Activated B cell treated with CpG ODN at 0.5 μM for 24 hours (primary cell): ENCODE measurements at regions of chr3 and their contacts with region 1.

Region 1: DNA sequence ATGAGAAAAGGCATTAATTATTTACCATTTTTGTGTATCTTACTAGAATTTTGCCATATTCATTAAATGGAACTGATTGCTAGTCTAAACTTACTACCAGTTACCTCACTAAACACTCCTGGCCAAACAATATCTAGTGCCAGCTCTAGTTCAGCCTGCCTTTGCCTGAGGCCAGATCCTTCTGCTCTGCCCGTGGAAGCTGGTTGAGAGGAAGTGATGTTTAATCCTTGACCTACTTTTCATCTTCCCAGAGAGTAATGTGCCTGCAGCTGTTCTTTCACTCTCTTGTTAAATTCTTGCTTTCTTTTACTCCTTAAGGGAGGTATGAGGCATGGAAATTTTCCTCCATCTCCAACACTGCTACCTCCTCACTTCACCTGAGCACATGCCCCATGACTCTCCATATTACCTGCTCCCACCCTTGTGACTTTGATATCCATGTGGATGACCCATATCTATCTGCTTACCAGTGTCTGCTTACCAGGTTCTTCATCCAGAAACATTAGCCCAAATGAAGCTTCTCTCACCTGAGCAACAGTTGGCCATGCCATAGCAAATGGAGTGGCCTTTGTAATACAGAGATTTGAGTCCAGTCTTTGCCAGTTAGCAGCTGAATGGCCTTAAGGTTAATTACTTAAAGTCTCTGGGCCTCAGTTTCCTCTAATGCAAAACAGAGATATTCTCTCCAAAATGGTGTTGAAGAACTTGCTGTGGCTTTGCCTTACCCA is 53.4 kb downstream of the UBE2E1 start:
- DNase-seq: no peak
- ATAC-seq: no peak
- H3K4me3 Mint-ChIP-seq: no peak overlapping the region
- H3K27ac Mint-ChIP-seq: no peak overlapping the region
- H3K4me1 Mint-ChIP-seq: peaks cover 54% of the 10 kb centered on the region
- H3K27me3 Mint-ChIP-seq: no peaks in the 10 kb centered on the region
- CTCF ChIP-seq: no peak

Region 2: GRCh38 chr3:23071758-23072157 is 787.4 kb before region 1 on chr3:
- CTCF ChIA-PET with region 1: no interaction called
- POLR2A ChIA-PET with region 1: interaction called, 4 read pairs
- intact Hi-C with region 1: loop called (anchors 5 kb)
- DNase-seq: no peak
- ATAC-seq: peak; percentile 89
- H3K4me3 Mint-ChIP-seq: peak overlapping the region; percentile 1
- H3K27ac Mint-ChIP-seq: peak overlapping the region; percentile 42
- H3K4me1 Mint-ChIP-seq: peaks cover 56% of the 10 kb centered on the region
- H3K27me3 Mint-ChIP-seq: no peaks in the 10 kb centered on the region
- CTCF ChIP-seq: no peak

Region 3: DNA sequence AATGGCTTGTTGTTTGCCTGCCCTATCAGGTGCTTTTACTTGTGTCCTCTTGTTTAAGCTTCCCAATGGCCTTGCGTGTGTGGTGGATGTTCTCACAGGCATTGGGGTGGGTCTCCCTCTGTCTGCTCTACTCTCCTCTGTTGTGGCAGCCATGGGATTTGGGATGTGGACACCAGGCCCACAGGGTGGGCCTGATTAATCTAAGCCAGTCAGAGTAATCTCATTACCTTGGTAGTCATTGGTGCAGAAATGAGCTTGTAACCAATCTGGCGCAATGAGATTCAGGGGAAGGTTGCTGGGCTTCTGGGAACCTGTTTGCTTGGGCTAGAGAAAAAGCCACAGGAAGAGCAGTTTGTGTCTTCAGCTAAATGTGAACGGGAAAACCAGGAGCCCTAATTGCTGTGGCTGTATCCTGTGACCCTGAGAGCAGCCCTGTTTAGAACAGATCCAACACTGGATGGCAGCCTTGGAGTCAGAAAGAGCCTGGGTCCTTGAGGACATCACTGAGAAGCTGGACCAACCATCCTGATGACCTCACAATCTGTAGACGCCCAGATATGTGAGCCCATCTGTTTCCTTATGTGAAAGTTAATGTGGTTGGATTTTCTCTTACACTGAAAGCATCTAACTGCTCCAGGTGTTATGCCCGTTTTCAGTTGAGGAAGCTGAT is 210.7 kb before region 1 on chr3:
- CTCF ChIA-PET with region 1: no interaction called
- POLR2A ChIA-PET with region 1: no interaction called
- intact Hi-C with region 1: no loop called
- DNase-seq: no peak
- ATAC-seq: no peak
- H3K4me3 Mint-ChIP-seq: no peak overlapping the region
- H3K27ac Mint-ChIP-seq: no peak overlapping the region
- H3K4me1 Mint-ChIP-seq: peaks cover 14% of the 10 kb centered on the region
- H3K27me3 Mint-ChIP-seq: no peaks in the 10 kb centered on the region
- CTCF ChIP-seq: no peak

Region 4: GRCh38 chr3:23761440-23761896 is 97.7 kb before region 1 on chr3:
- CTCF ChIA-PET with region 1: interaction called, 3 read pairs
- POLR2A ChIA-PET with region 1: no interaction called
- intact Hi-C with region 1: loop called (anchors 5 kb)
- DNase-seq: no peak
- ATAC-seq: no peak
- H3K4me3 Mint-ChIP-seq: no peak overlapping the region
- H3K27ac Mint-ChIP-seq: peak overlapping the region; percentile 67
- H3K4me1 Mint-ChIP-seq: peaks cover 34% of the 10 kb centered on the region
- H3K27me3 Mint-ChIP-seq: no peaks in the 10 kb centered on the region
- CTCF ChIP-seq: no peak

Region 5: DNA sequence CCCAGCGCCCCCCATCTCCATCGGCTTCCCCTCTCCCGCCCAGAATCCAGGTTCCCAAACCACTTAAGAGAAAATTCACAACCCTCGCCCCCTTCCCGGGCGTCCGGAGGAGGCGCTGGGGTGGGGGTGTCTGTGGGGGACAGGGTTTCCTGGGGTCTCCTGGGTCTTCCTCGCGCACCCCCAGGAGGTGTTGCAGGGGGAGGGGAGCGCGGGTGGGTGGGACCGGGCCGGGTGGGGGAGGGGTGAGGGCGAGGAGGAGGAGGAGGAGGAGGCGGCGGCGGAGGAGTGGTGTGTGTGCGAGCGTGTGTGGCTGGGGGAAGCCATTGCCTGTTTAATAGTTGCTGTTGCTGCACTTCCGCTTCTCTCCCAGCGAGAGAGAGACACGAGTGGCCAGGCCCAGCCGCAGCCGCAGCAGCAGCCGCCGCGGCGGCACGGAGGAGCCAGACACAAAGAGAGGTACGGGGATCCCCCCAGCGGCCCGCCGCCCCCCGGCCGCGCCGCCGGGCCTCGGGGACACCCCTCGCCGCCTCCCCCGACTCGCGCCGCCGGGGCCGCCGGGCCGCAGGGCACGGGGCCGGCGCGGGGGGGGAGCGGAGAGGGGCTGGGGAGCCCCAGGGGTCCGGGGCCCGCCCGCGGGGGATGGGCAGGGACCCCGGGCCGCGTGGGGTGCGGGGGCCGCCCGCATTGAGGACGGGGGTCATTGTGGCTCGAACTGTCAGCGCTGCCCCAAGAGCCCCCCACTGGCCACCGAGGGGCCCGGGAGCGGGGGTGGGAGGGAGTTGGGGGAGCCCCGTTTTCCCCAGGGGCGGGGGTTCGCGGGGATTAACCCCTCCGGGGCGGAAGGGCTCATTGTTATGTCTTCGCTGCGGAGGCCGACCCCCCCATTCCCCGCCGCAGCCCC is 53.3 kb before region 1 on chr3 and contains the start of gene UBE2E1:
- CTCF ChIA-PET with region 1: interaction called, 4 read pairs
- POLR2A ChIA-PET with region 1: interaction called, 6 read pairs
- intact Hi-C with region 1: loop called (anchors 1 kb)
- DNase-seq: peak; percentile 68
- ATAC-seq: peak; percentile 77
- H3K4me3 Mint-ChIP-seq: peak within 1 kb of the TSS; percentile 97
- H3K27ac Mint-ChIP-seq: peak within 1 kb of the TSS; percentile 97
- H3K4me1 Mint-ChIP-seq: peaks cover 41% of the 10 kb centered on the region
- H3K27me3 Mint-ChIP-seq: no peaks in the 10 kb centered on the region
- CTCF ChIP-seq: no peak
- total RNA-seq, gene UBE2E1: 79.9 and 85.2 TPM in 2 replicates

Region 6: GRCh38 chr3:23845326-23846221 is 13.6 kb before region 1 on chr3:
- CTCF ChIA-PET with region 1: no interaction called
- POLR2A ChIA-PET with region 1: no interaction called
- intact Hi-C with region 1: loop called (anchors 1 kb)
- DNase-seq: no peak
- ATAC-seq: no peak
- H3K4me3 Mint-ChIP-seq: no peak overlapping the region
- H3K27ac Mint-ChIP-seq: no peak overlapping the region
- H3K4me1 Mint-ChIP-seq: peaks cover 29% of the 10 kb centered on the region
- H3K27me3 Mint-ChIP-seq: no peaks in the 10 kb centered on the region
- CTCF ChIP-seq: no peak

Region 7: GRCh38 chr3:23945903-23946751 is 86.9 kb after region 1 on chr3:
- CTCF ChIA-PET with region 1: no interaction called
- POLR2A ChIA-PET with region 1: interaction called, 3 read pairs
- intact Hi-C with region 1: loop called (anchors 1 kb)
- DNase-seq: peak; percentile 97
- ATAC-seq: peak; percentile 79
- H3K4me3 Mint-ChIP-seq: peak overlapping the region; percentile 86
- H3K27ac Mint-ChIP-seq: peak overlapping the region; percentile 94
- H3K4me1 Mint-ChIP-seq: peaks cover 44% of the 10 kb centered on the region
- H3K27me3 Mint-ChIP-seq: no peaks in the 10 kb centered on the region
- CTCF ChIP-seq: no peak